PC-3 (cell line): ENCODE measurements at regions of chr5 and their contacts with region 1.

Region 1: GRCh38 chr5:141564216-141564692 is 54.5 kb downstream of the DIAPH1 start:
- DNase-seq: peak; percentile 89
- ATAC-seq: no peak; the same call in 1 of the 2 replicates
- H3K4me3 ChIP-seq: no peak overlapping the region
- H3K27ac ChIP-seq: peak overlapping the region; percentile 89
- H3K4me1 ChIP-seq: peaks cover 42% of the 10 kb centered on the region
- H3K27me3 ChIP-seq: no peaks in the 10 kb centered on the region
- CTCF ChIP-seq: peak; percentile 92

Region 2: GRCh38 chr5:141094481-141095262 is 469.6 kb before region 1 on chr5 and contains the start of gene PCDHB2:
- CTCF ChIA-PET with region 1: interaction called, 6 read pairs
- POLR2A ChIA-PET with region 1: no interaction called
- intact Hi-C with region 1: loop called (anchors 2 kb)
- DNase-seq: peak; percentile 81
- ATAC-seq: peak; percentile 97
- H3K4me3 ChIP-seq: peak within 1 kb of the TSS; percentile 72
- H3K27ac ChIP-seq: no peak within 1 kb of the TSS
- H3K4me1 ChIP-seq: no peaks in the 10 kb centered on the region
- H3K27me3 ChIP-seq: no peaks in the 10 kb centered on the region
- CTCF ChIP-seq: peak; percentile 73
- total RNA-seq, gene PCDHB2: 13.8 and 15.0 TPM in 2 replicates

Region 3: GRCh38 chr5:141359790-141360426 is 204.3 kb before region 1 on chr5 and contains the start of gene PCDHGB2:
- CTCF ChIA-PET with region 1: interaction called, 7 read pairs
- POLR2A ChIA-PET with region 1: no interaction called
- intact Hi-C with region 1: loop called (anchors 1 kb)
- DNase-seq: peak; percentile 63
- ATAC-seq: peak; percentile 62
- H3K4me3 ChIP-seq: peak within 1 kb of the TSS; percentile 69
- H3K27ac ChIP-seq: 0 out of 2 replicates have a peak within 1 kb of the TSS, but pooled peaks have one; percentile 23
- H3K4me1 ChIP-seq: 0 out of 2 replicates have a peak, but pooled peaks cover 3% of the 10 kb centered on the region
- H3K27me3 ChIP-seq: no peaks in the 10 kb centered on the region
- CTCF ChIP-seq: peak; percentile 67; the same call in 1 of the 2 replicates
- total RNA-seq, gene PCDHGB2: 1.4 and 2.2 TPM in 2 replicates

Region 4: GRCh38 chr5:141503699-141504098 is 60.6 kb before region 1 on chr5:
- CTCF ChIA-PET with region 1: no interaction called
- POLR2A ChIA-PET with region 1: no interaction called
- intact Hi-C with region 1: no loop called
- DNase-seq: no peak
- ATAC-seq: no peak
- H3K4me3 ChIP-seq: no peak overlapping the region
- H3K27ac ChIP-seq: no peak overlapping the region
- H3K4me1 ChIP-seq: 0 out of 2 replicates have a peak, but pooled peaks cover 4% of the 10 kb centered on the region
- H3K27me3 ChIP-seq: no peaks in the 10 kb centered on the region
- CTCF ChIP-seq: no peak

Region 5: GRCh38 chr5:141524604-141525597 is 39.4 kb before region 1 on chr5:
- CTCF ChIA-PET with region 1: interaction called, 7 read pairs
- POLR2A ChIA-PET with region 1: no interaction called
- intact Hi-C with region 1: loop called (anchors 1 kb)
- DNase-seq: peak; percentile 88
- ATAC-seq: peak; percentile 53
- H3K4me3 ChIP-seq: no peak overlapping the region
- H3K27ac ChIP-seq: peak overlapping the region; percentile 25; the same call in 1 of the 2 replicates
- H3K4me1 ChIP-seq: peaks cover 40% of the 10 kb centered on the region
- H3K27me3 ChIP-seq: no peaks in the 10 kb centered on the region
- CTCF ChIP-seq: peak; percentile 98